ENCODE measurements at regions of chr3 and their contacts with region 1.

Region 1: DNA sequence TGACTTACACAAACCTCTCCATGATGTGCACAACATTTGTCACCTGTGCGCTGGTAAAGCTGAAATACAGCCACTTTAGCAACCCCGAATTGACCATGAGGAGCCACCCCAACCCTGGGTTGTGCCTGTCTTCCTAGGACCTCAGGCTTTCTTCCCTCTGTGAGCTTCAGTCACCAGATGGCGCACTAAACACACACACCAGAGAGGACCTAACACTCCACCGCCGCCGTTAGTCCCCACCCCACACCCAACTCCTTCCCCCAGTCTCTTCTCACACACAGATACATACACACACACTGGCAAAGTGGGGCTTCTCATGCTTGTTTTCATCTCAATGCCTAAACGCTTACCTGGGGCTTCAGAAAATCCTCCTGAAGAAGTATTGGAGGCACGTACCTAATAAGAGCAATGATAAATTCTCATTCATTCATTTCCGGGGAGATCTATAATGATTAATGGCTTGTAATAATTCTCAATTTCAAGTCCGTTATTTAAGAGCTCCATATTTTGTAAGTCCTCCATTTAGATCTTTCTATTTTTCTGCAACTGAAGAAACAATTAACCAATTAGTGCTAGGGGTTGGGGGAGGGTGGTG is 2.1 kb upstream of the CCDC80 start:
- DNase-seq: peak; percentile 86
- ATAC-seq: peak; percentile 86
- H3K4me3 Mint-ChIP-seq: peak overlapping the region; percentile 12; the same call in 1 of the 2 replicates
- H3K27ac Mint-ChIP-seq: no peak overlapping the region
- H3K4me1 Mint-ChIP-seq: peaks cover 18% of the 10 kb centered on the region
- H3K27me3 Mint-ChIP-seq: no peaks in the 10 kb centered on the region
- CTCF ChIP-seq: peak; percentile 63

Region 2: GRCh38 chr3:112582244-112582874 is 60.6 kb before region 1 on chr3:
- CTCF ChIA-PET with region 1: interaction called, 21 read pairs
- POLR2A ChIA-PET with region 1: no interaction called
- DNase-seq: peak; percentile 26
- ATAC-seq: 0 out of 2 replicates have a peak, but pooled peaks have one; percentile 36
- H3K4me3 Mint-ChIP-seq: no peak overlapping the region
- H3K27ac Mint-ChIP-seq: no peak overlapping the region
- H3K4me1 Mint-ChIP-seq: peaks cover 18% of the 10 kb centered on the region
- H3K27me3 Mint-ChIP-seq: no peaks in the 10 kb centered on the region
- CTCF ChIP-seq: no peak

Region 3: DNA sequence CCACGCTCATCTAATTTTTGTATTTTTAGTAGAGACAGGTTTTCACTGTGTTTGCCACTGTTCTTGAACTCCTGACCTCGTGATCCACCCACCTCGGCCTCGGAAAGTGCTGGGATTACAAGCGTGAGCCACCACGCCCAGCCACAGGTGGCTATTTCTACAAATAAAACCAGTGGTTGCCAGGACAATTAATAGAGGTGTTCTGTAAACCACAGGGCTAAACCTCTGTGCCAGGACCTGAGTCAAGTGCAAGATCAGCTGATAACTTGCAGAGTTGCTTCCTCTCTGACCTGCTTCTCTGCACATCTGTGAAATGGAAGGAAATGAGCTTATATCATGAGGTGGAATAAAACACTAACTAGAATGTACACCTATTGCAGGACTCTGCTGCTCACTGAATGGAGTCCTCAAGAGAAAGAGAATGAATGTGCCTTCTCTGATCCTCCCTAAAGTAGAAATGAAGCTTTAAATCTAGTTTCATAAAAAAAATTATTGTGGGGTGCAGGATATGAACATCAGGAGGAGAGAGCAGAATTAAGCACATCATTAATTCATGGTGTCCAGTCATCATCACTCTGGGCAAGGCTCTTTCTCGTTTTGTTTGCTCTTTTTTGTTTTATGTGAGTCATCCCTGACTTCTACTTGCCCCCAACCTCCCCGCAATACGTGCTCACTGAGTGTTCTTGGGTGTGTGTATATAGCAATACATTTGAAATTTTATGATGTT is 131.0 kb after region 1 on chr3:
- CTCF ChIA-PET with region 1: no interaction called
- POLR2A ChIA-PET with region 1: no interaction called
- DNase-seq: no peak
- ATAC-seq: no peak
- H3K4me3 Mint-ChIP-seq: no peak overlapping the region
- H3K27ac Mint-ChIP-seq: no peak overlapping the region
- H3K4me1 Mint-ChIP-seq: peaks cover 11% of the 10 kb centered on the region
- H3K27me3 Mint-ChIP-seq: peaks cover 5% of the 10 kb centered on the region
- CTCF ChIP-seq: no peak

Region 4: GRCh38 chr3:112814266-112814665 is 171.3 kb after region 1 on chr3:
- CTCF ChIA-PET with region 1: interaction called, 14 read pairs
- POLR2A ChIA-PET with region 1: no interaction called
- DNase-seq: no peak
- ATAC-seq: peak; percentile 72
- H3K4me3 Mint-ChIP-seq: no peak overlapping the region
- H3K27ac Mint-ChIP-seq: no peak overlapping the region
- H3K4me1 Mint-ChIP-seq: peaks cover 15% of the 10 kb centered on the region
- H3K27me3 Mint-ChIP-seq: no peaks in the 10 kb centered on the region
- CTCF ChIP-seq: no peak

Region 5: DNA sequence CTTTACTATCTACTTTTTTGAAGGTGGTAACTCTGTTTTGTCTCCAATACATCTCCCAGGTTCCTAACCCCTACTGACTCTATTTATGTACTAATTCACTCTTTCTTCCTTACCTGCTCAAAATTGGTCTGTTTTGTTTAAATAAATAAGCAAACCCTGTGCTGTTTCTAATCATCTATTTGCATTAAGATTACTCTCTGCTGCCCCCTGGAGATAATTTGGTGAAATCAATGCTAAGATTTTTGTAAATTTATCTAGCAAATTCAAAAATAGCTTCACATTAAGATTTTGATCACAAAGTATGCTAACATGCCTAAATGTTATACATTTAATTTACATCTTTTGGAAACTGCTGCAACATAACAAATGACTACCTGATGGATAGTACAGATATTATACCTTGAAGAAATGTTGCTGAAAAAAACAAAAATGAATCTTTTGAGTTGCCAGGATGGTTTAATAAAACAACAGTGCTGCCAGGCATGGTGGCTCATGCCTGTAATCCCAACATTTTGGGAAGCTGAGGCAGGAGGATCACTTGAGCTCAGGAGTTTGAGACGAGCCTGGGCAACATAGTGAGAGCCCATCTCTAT is 336.3 kb after region 1 on chr3:
- CTCF ChIA-PET with region 1: interaction called, 17 read pairs
- POLR2A ChIA-PET with region 1: no interaction called
- DNase-seq: no peak
- ATAC-seq: no peak
- H3K4me3 Mint-ChIP-seq: no peak overlapping the region
- H3K27ac Mint-ChIP-seq: no peak overlapping the region
- H3K4me1 Mint-ChIP-seq: no peaks in the 10 kb centered on the region
- H3K27me3 Mint-ChIP-seq: no peaks in the 10 kb centered on the region
- CTCF ChIP-seq: peak; percentile 44; the same call in 1 of the 2 replicates